Activated CD4-positive, alpha-beta T cell treated with anti-CD3 and anti-CD28 coated beads for 36 hours (primary cell): ENCODE measurements at regions of chr3 and their contacts with region 1.

Region 1: GRCh38 chr3:39146984-39147591 is 6.3 kb downstream of the CSRNP1 start:
- DNase-seq: peak; percentile 90
- ATAC-seq: peak; percentile 68
- H3K4me3 Mint-ChIP-seq: peak overlapping the region; percentile 93
- H3K27ac Mint-ChIP-seq: peak overlapping the region; percentile 95
- H3K4me1 Mint-ChIP-seq: peaks cover 68% of the 10 kb centered on the region
- H3K27me3 Mint-ChIP-seq: no peaks in the 10 kb centered on the region

Region 2: DNA sequence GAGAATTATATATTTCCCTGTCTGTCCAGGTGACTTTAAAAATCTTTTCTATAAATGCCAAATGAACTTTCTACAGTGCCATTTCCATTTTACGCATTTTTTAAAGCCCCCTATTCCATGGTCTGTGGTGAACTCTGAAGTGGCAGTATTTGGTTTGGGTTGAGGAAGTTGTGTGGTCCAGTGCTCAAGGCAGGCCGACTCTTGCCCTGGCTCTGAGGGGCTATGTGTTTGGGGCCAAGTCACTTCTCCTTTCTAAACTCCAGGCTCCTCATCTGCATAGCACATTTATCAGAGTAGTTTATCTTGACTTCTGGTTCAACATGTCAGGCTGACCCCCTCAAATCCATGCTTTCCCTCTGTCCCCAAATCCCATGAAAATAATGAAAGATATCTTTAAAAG is 25.5 kb before region 1 on chr3:
- CTCF ChIA-PET with region 1: no interaction called
- POLR2A ChIA-PET with region 1: no interaction called
- intact Hi-C with region 1: no loop called
- DNase-seq: no peak
- ATAC-seq: no peak
- H3K4me3 Mint-ChIP-seq: no peak overlapping the region
- H3K27ac Mint-ChIP-seq: no peak overlapping the region
- H3K4me1 Mint-ChIP-seq: no peaks in the 10 kb centered on the region
- H3K27me3 Mint-ChIP-seq: no peaks in the 10 kb centered on the region

Region 3: DNA sequence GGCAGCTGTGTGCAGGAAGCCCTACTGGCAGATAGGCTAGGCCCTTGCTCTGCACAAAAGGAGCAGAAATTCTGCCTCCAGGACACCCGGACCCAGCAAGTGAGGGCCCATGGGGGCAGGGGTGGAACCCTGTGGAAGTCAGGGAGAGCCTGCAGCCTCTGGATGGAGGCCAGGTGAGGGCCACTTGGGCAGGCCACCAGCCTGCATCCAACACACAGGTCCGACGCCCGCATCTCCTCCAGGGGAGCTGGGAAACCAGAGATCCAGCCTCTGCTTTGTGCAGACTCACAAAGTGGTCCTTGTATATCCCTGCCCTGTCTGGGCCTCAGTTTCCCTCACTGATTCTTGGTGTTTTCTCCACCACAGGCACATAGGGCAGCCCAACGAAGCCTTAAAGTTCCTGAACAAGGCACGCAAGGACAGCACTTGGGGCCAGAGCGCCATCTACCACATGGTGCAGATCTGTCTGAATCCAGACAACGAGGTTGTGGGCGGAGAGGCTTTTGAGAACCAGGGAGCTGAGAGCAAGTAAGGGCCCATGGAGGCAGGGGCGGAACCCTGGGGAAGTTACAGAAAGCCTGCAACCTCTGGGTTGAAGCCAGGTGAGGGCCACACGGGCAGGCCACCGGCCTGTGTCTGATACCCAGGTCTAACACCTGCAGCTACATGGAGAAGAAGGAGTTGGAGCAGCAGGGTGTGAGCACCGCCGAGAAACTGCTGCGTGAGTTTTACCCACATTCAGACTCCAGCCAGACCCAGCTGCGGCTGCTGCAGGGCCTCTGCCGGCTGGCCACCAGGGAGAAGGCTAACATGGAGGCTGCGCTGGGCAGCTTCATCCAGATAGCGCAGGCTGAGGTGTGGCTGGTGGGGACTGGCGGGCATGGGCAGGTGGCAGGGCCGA is 10.3 kb before region 1 on chr3:
- CTCF ChIA-PET with region 1: interaction called, 9 read pairs
- POLR2A ChIA-PET with region 1: interaction called, 12 read pairs
- intact Hi-C with region 1: no loop called
- DNase-seq: peak; percentile 28
- ATAC-seq: no peak
- H3K4me3 Mint-ChIP-seq: no peak overlapping the region
- H3K27ac Mint-ChIP-seq: no peak overlapping the region
- H3K4me1 Mint-ChIP-seq: peaks cover 32% of the 10 kb centered on the region
- H3K27me3 Mint-ChIP-seq: no peaks in the 10 kb centered on the region

Region 4: DNA sequence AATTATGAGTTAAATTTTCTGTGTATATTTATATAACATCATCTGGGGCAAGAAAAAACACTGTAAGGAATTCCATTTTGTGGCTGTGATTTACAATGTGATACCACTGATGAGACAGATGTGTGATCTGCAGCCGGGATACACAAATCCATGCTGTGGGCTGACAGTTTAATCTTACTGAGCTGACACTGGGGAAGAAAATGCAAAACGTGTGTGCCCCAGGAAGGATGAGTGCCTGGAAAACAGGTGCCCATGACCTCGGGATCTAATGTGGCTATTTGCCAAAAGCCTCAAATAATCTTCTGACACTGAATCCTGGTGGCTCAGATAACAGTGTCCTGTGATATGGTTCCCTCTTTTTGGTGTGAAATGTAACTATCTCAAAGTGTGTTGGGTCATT is 672.8 kb after region 1 on chr3:
- CTCF ChIA-PET with region 1: no interaction called
- POLR2A ChIA-PET with region 1: no interaction called
- intact Hi-C with region 1: no loop called
- DNase-seq: no peak
- ATAC-seq: no peak
- H3K4me3 Mint-ChIP-seq: no peak overlapping the region
- H3K27ac Mint-ChIP-seq: no peak overlapping the region
- H3K4me1 Mint-ChIP-seq: no peaks in the 10 kb centered on the region
- H3K27me3 Mint-ChIP-seq: peaks cover 7% of the 10 kb centered on the region